Gastrocnemius medialis (tissue), 4 donors: ENCODE measurements at regions of chr4 and their contacts with region 1.

Region 1: DNA sequence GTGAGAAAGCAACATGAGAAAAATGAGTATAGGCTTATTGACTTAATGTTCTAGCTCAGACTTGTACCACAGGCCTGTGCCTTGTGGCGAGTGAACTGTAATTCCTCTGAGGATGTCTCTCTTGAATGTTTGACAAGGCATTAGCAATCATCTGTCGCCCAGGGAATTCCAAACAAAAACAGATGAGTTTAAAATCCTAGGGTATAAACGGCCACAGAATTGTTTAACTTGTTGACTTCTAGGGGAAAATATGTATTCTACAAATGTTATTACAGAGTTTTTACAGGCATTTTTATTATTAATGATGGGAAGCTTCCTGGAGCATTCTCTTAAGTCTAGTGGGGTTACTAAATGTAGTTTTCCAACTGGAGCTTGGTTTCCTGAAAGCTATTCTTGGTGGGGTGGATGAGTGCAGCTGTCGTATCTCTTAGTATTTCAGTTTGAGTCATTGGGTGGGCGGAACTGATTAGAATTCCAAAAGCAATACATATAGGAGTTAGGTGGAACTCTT is 40.6 kb downstream of the ARHGAP10 start:
- DNase-seq: no peak
- ATAC-seq: peak; percentile 16 to 60
- H3K4me3 ChIP-seq: peak overlapping the region in 3 of 4 donors; percentile 8 to 23 (median 10)
- H3K27ac ChIP-seq: peak overlapping the region; percentile 76 to 83 (median 80)
- H3K4me1 ChIP-seq: peaks cover 70 to 91% of the 10 kb centered on the region in 2 donors
- H3K27me3 ChIP-seq: no peaks in the 10 kb centered on the region
- CTCF ChIP-seq: no peak
- POLR2A ChIP-seq: no peak

Region 2: DNA sequence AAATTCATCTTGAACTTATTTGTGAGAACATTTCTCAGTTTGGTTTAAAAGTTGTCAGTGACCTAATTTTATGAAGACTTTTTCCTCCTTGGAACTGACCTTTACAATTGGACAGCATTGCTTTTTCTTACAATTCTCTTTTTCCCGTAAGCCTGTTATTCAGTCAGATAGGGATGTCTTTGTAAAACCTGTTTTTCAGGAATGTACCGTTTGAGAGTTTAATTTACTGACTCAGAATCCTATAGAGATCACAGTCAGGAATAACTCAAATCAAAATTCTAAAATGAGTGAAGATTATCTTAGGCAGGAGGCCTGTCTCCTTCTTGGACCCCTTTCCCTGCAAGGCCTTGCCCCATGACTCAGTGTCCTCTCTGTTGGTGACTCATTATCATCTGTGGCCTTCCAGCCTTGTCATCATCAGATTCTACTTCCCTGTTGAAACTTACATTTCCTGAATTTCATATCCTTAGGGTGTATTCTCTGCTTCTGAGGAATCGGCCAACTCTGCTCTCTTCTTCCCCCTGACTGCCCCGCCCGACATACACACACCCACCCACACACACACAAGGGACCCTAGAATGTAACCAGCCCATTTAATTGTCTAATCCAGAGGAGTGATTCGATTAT is 59.1 kb after region 1 on chr4:
- in situ Hi-C with region 1: no loop called
- intact Hi-C with region 1: loop called (anchors 2 kb)
- DNase-seq: peak; percentile 66 to 75
- ATAC-seq: peak; percentile 57 to 61
- H3K4me3 ChIP-seq: no peak overlapping the region
- H3K27ac ChIP-seq: peak overlapping the region; percentile 92 to 95 (median 94)
- H3K4me1 ChIP-seq: peaks cover 72 to 82% of the 10 kb centered on the region in 2 donors
- H3K27me3 ChIP-seq: no peaks in the 10 kb centered on the region
- CTCF ChIP-seq: no peak
- POLR2A ChIP-seq: peak in 1 of 2 donors; percentile 35

Region 3: GRCh38 chr4:147933316-147933715 is 160.8 kb after region 1 on chr4:
- in situ Hi-C with region 1: no loop called
- intact Hi-C with region 1: no loop called
- DNase-seq: peak; percentile 31 to 56
- ATAC-seq: peak; percentile 90 to 97
- H3K4me3 ChIP-seq: no peak overlapping the region
- H3K27ac ChIP-seq: peak overlapping the region in 1 of 4 donors; percentile 42
- H3K4me1 ChIP-seq: peaks cover 0 to 3% of the 10 kb centered on the region in 2 donors
- H3K27me3 ChIP-seq: no peaks in the 10 kb centered on the region
- CTCF ChIP-seq: peak in 3 of 5 experiments; percentile 13 to 27 (median 18)
- POLR2A ChIP-seq: no peak

Region 4: GRCh38 chr4:148344352-148344751 is 571.8 kb after region 1 on chr4:
- in situ Hi-C with region 1: no loop called
- intact Hi-C with region 1: no loop called
- DNase-seq: no peak
- ATAC-seq: no peak
- H3K4me3 ChIP-seq: no peak overlapping the region
- H3K27ac ChIP-seq: no peak overlapping the region
- H3K4me1 ChIP-seq: peaks cover 17 to 22% of the 10 kb centered on the region in 2 donors
- H3K27me3 ChIP-seq: no peaks in the 10 kb centered on the region
- CTCF ChIP-seq: no peak
- POLR2A ChIP-seq: no peak